Activated CD4-positive, alpha-beta memory T cell treated with anti-CD3 and anti-CD28 coated beads for 36 hours (primary cell): ENCODE measurements at regions of chr3 and their contacts with region 1.

Region 1: DNA sequence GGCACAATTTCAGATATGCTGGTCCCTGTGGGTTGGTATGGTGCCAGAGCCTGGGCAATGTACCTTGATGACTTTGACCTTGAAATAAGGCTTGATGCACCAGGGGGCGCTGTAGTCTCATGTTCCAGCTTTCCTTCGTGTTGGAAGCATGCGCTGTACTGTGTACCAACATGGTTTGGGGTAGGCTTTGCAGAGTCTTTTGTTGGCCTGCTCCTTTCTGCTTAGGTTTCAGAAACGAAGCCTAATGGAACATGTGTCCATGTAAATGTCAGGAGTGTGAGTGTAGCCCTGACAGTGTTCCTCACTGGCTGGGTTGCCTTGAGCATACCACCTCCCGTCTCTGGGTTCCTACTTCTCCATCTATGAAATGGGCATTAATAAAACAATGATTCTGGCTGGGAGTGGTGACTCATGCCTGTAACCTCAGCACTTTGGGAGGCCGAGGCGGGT is 3.6 kb upstream of the CCR4 start:
- DNase-seq: peak; percentile 96
- H3K4me3 Mint-ChIP-seq: no peak overlapping the region
- H3K27ac Mint-ChIP-seq: peak overlapping the region; percentile 97
- H3K4me1 Mint-ChIP-seq: peaks cover 46% of the 10 kb centered on the region
- H3K27me3 Mint-ChIP-seq: no peaks in the 10 kb centered on the region

Region 2: GRCh38 chr3:32257639-32258038 is 690.2 kb before region 1 on chr3:
- CTCF ChIA-PET with region 1: no interaction called
- POLR2A ChIA-PET with region 1: no interaction called
- intact Hi-C with region 1: no loop called
- DNase-seq: peak; percentile 26
- H3K4me3 Mint-ChIP-seq: no peak overlapping the region
- H3K27ac Mint-ChIP-seq: no peak overlapping the region
- H3K4me1 Mint-ChIP-seq: peaks cover 22% of the 10 kb centered on the region
- H3K27me3 Mint-ChIP-seq: no peaks in the 10 kb centered on the region

Region 3: GRCh38 chr3:32973982-32974381 is 26.2 kb after region 1 on chr3:
- CTCF ChIA-PET with region 1: interaction called, 7 read pairs
- POLR2A ChIA-PET with region 1: no interaction called
- intact Hi-C with region 1: loop called (anchors 1 kb)
- DNase-seq: peak; percentile 54
- H3K4me3 Mint-ChIP-seq: no peak overlapping the region
- H3K27ac Mint-ChIP-seq: peak overlapping the region; percentile 78
- H3K4me1 Mint-ChIP-seq: peaks cover 56% of the 10 kb centered on the region
- H3K27me3 Mint-ChIP-seq: no peaks in the 10 kb centered on the region

Region 4: DNA sequence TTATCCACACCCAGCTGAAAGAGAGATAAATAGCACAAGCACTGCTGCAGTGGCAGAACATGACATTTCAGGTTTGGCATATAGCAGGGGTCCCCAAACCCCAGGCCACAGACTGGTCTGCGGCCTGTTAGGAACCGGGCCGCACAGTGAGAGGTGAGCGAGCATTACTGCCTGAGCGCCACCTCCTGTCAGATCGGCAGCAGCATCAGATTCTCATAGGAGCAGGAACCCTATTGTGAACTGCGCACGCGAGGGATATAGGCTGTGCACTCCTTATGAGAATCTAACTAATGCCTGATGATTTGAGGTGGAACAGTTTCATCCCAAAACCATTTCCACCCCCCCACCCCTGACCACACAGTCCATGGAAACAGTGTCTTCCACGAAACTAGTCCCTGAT is 58.3 kb after region 1 on chr3:
- CTCF ChIA-PET with region 1: interaction called, 23 read pairs
- POLR2A ChIA-PET with region 1: interaction called, 3 read pairs
- intact Hi-C with region 1: loop called (anchors 1 kb)
- DNase-seq: peak; percentile 66
- H3K4me3 Mint-ChIP-seq: no peak overlapping the region
- H3K27ac Mint-ChIP-seq: peak overlapping the region; percentile 86
- H3K4me1 Mint-ChIP-seq: peaks cover 72% of the 10 kb centered on the region
- H3K27me3 Mint-ChIP-seq: no peaks in the 10 kb centered on the region

Region 5: DNA sequence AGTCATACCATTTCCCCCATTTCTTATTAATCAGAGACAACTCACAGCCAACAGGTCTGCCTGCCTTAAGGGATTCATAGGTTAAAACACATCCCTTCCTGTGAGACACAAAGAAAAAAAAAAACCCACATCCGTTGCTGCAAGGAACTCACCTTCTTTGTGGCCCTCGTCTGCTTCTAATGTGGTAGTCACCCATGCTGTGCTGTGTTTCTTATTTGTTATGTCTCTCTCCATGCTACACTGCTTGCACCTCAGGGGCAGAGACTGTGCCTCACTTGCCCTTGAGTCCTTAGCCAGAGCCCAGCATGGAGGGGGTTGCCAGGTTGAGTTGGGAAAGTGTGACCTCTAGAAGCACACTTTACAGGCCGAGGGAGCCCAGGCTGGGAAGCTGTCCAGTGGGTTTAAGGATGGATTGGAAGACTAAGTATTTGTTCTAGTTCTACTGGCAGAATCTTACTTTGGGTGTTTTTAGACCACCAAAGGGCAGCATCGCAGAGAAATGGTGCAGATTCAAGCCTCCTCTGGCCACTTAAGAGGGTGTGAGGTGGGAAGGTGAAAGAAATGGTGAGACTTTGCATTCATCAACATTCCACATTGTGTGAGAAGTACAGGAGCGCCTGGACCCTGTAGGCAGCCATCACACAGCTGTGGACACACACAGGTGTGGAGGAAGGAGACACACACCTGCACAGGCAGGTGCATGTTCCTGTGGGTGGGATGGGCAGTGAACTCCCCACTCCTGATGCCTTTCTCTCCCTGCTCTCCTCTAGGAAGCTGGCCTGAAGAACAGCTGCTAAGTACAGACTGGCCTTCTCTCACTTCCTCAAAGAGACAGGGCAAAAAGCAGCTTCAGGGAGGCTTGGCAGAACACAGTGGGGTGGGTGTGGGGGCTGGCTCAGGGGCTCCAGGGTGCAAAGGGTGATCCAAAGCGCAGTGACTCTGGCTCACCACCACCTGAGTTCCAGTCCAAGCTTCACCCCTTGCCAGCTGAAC is 100.3 kb after region 1 on chr3:
- CTCF ChIA-PET with region 1: interaction called, 18 read pairs
- POLR2A ChIA-PET with region 1: interaction called, 4 read pairs
- intact Hi-C with region 1: loop called (anchors 1 kb)
- DNase-seq: peak; percentile 73
- H3K4me3 Mint-ChIP-seq: peak overlapping the region; percentile 52
- H3K27ac Mint-ChIP-seq: peak overlapping the region; percentile 96
- H3K4me1 Mint-ChIP-seq: peaks cover 79% of the 10 kb centered on the region
- H3K27me3 Mint-ChIP-seq: no peaks in the 10 kb centered on the region

Region 6: GRCh38 chr3:33113772-33114621 is 166.2 kb after region 1 on chr3 and contains the start of gene CRTAP:
- CTCF ChIA-PET with region 1: no interaction called
- POLR2A ChIA-PET with region 1: no interaction called
- intact Hi-C with region 1: loop called (anchors 5 kb)
- DNase-seq: peak; percentile 91
- H3K4me3 Mint-ChIP-seq: peak within 1 kb of the TSS; percentile 80
- H3K27ac Mint-ChIP-seq: peak within 1 kb of the TSS; percentile 73
- H3K4me1 Mint-ChIP-seq: peaks cover 59% of the 10 kb centered on the region
- H3K27me3 Mint-ChIP-seq: no peaks in the 10 kb centered on the region
- total RNA-seq, gene CRTAP: 57.6 to 60.0 TPM

Region 7: GRCh38 chr3:33440323-33441232 is 492.8 kb after region 1 on chr3 and contains the start of gene UBP1:
- CTCF ChIA-PET with region 1: no interaction called
- POLR2A ChIA-PET with region 1: no interaction called
- intact Hi-C with region 1: loop called (anchors 5 kb)
- DNase-seq: peak; percentile 99
- H3K4me3 Mint-ChIP-seq: peak within 1 kb of the TSS; percentile 100
- H3K27ac Mint-ChIP-seq: peak within 1 kb of the TSS; percentile 100
- H3K4me1 Mint-ChIP-seq: peaks cover 39% of the 10 kb centered on the region
- H3K27me3 Mint-ChIP-seq: no peaks in the 10 kb centered on the region
- total RNA-seq, gene UBP1: 52.6 to 53.2 TPM